Dorsolateral prefrontal cortex (tissue), 120 donors: ENCODE measurements at regions of chr3 and their contacts with region 1.

Region 1: DNA sequence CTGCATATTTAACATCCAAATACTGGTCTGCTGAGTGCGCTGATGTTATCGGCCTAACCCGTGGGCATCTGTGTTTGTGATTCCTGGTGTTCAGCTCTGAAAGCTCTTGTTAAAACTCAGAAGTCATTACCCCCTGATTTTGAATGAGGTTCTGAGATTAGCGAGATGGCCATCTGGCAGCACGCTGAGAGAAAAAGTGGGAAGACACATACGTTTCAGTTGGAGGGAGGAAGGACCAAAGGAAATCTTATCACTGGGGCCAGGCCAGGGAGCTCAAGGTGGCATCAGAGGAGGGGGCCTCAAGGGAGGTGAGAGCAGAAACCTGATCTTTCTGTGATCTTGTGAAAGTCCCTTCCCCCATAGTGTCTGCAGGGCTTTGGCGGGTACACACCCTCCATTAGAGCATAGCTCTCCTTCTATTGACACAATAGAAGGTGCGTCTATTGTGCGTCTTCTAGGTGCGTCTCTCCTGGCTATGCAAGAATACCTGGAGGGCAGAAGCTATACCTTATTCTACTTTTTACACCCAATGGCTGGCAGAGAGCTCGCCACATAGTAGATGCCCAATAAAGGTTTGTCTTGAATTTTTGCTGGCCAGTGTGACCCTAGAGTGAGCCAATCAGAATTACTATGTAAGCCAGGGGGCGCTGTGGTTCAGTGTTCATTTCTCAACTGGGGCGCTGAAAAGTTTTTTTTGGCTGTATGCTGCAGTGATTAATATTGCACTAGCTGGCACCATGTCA is 182.4 kb downstream of the SHQ1 start:
- DNase-seq: no peak
- H3K4me3 ChIP-seq: no peak overlapping the region
- H3K27ac ChIP-seq: peak overlapping the region in 15 of 59 donors; percentile 2 to 99 (median 97)
- H3K27me3 ChIP-seq: peaks cover 0 to 9% (median 0%) of the 10 kb centered on the region in 45 donors
- CTCF ChIP-seq: peak; percentile 17 to 67 (median 52)

Region 2: GRCh38 chr3:72756900-72757299 is 91.0 kb after region 1 on chr3:
- intact Hi-C with region 1: no loop called
- DNase-seq: no peak
- H3K4me3 ChIP-seq: no peak overlapping the region
- H3K27ac ChIP-seq: no peak overlapping the region
- H3K27me3 ChIP-seq: no peaks in the 10 kb centered on the region
- CTCF ChIP-seq: no peak

Region 3: DNA sequence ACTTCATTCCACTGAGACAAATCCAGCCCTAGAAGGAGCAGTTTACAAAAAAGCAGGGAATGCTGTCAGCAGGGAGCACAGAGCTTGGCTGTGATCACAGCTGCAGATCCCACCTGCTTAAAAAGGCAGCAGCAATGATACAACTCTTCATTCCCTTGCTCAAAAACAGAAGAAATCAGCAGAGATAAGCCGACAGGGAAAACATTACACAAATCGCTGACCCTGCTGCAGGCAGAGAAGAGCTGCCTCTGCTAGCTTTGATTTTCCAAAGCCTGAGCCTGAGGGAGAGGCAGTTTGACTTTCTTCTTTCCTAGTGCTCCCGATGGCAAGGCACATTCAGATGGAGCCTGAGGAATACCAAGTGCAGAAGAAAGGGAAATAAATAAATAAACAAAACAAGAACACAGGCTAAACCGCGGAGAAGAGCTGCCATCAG is 102.2 kb after region 1 on chr3:
- intact Hi-C with region 1: loop called in 1 of 2 experiments (anchors 5 kb)
- DNase-seq: peak in 3 of 10 donors; percentile 7 to 25 (median 9)
- H3K4me3 ChIP-seq: peak overlapping the region in 44 of 59 donors; percentile 5 to 58 (median 28)
- H3K27ac ChIP-seq: peak overlapping the region in 56 of 59 donors; percentile 4 to 87 (median 70)
- H3K27me3 ChIP-seq: no peaks in the 10 kb centered on the region
- CTCF ChIP-seq: no peak